GM10248 (cell line): ENCODE measurements at regions of chr17 and their contacts with region 1.

Region 1: DNA sequence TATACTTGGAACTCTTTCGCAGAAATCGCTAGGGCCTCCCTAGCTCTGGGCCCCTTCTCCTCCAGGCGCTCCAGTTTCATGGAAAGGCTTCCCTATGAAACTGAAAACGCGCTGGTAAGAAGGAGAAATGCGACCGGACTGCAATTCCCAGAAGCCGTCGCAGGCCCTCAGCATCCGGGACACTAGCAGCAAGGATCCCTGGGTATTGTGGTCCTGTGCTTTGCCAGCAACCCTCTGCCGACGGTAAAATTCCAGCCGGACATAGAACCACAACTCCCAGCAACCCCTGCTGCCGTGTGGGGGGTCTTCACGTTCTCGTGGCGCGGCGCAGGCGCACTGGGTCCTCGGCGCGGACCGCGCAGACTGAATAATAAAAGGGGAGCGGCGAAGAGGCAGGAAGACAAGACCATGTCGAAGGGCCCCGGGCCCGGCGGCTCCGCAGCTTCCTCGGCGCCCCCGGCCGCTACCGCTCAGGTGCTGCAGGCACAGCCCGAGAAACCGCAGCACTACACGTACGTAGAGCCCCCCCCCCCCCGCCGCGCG is at the start of gene UNK:
- DNase-seq: peak; percentile 94
- CTCF ChIP-seq: no peak

Region 2: DNA sequence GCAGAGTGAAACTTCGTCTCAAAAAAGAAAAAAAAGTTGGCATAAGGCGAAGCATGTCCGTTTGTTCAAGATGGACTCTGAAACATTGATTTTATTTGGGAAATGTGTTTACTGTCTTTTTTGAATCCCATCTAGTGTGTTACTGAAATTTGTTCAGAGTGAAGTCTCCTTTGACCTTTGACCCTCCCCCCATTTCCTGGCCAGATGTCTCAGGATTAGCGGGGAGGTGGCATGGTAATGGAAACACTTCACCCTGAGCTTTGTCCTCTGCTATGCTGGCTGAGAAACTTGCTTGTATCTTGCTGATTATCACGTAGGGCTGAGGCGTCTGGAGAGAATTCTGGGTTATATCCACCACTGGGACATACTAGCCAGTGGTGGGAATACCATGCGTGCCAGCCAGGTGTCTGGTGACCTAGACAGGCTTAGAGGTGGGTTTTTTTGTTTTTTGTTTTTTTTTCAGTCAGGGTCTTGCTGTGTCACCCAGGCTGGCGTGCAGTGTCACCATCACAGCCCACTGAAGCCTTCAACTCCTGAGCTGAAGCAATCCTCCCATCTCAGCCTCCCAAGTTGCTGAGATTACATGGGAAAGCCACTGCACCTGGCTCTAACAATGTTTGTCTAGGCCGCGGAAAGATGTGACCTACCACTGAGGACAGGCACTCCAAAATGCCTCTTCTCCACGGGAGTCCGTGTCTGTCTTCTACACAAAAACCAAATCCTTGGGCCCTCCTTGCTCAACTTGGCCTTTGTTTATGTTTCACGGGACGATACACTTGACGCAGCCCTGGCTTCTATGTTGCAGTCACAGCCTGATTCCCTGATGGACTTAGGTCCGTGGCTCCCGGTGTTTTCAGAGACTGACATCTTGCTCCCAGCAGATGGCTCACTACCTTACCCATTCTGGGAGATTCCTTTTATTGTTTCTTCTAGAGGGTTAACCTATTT is 12.9 kb before region 1 on chr17:
- CTCF ChIA-PET with region 1: interaction called, 71 read pairs
- POLR2A ChIA-PET with region 1: interaction called, 24 read pairs
- DNase-seq: no peak
- CTCF ChIP-seq: no peak

Region 3: GRCh38 chr17:75799398-75799797 is 14.9 kb after region 1 on chr17:
- CTCF ChIA-PET with region 1: interaction called, 16 read pairs
- POLR2A ChIA-PET with region 1: interaction called, 8 read pairs
- DNase-seq: no peak
- CTCF ChIP-seq: peak; percentile 3

Region 4: GRCh38 chr17:75845049-75845860 is 60.7 kb after region 1 on chr17:
- CTCF ChIA-PET with region 1: interaction called, 13 read pairs
- POLR2A ChIA-PET with region 1: interaction called, 13 read pairs
- DNase-seq: peak; percentile 91
- CTCF ChIP-seq: peak; percentile 69